ENCODE measurements at regions of chr1 and their contacts with region 1.

Region 1: DNA sequence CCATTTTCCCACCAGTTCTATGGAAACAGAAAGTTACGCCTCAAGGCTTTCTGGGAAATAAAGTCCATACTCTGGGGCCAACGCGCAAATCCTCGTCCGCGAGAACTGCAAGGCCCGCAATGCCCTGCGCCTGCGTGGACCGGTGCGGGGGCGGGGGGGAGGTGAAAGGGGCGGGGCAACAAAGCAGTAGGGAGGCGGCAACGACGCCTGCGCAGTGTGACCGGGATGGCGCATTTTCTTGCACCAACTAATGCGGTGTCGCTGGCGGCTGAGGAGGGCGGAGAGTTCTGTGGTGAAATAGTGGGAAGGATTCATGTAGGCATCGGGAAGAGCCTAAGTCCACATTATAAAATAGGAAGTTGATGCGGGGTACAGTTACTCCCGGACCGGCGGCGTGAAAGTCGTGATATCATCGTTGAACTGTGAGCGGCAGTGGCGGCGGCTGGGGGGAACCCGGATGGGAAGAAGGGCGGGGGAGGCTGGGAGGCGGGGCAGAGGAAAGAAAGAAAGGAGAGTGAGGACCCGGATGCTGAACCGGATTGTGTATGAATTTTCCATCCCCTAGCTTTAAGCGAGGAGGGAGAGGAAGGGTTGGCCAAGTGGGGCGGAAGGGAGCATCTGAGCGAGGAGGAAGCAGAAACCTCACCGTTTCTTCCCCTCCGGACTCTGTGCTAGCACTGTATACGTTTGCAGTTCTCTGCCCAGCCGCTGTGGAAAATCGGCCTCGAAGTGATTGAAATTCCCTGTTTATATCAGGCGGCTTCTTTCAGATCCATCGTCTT is at the start of gene GGPS1:
- DNase-seq: peak; percentile 97
- H3K4me3 ChIP-seq: peak within 1 kb of the TSS; percentile 83
- H3K27ac ChIP-seq: peak within 1 kb of the TSS; percentile 92
- H3K4me1 ChIP-seq: peaks cover 13% of the 10 kb centered on the region
- H3K27me3 ChIP-seq: no peaks in the 10 kb centered on the region
- CTCF ChIP-seq: no peak
- total RNA-seq, gene GGPS1: 26.8 and 30.4 TPM in 2 replicates

Region 2: GRCh38 chr1:235043234-235043633 is 285.3 kb before region 1 on chr1:
- CTCF ChIA-PET with region 1: no interaction called
- POLR2A ChIA-PET with region 1: no interaction called
- intact Hi-C with region 1: no loop called
- DNase-seq: no peak
- H3K4me3 ChIP-seq: no peak overlapping the region
- H3K27ac ChIP-seq: no peak overlapping the region
- H3K4me1 ChIP-seq: no peaks in the 10 kb centered on the region
- H3K27me3 ChIP-seq: no peaks in the 10 kb centered on the region
- CTCF ChIP-seq: no peak

Region 3: GRCh38 chr1:235253219-235253962 is 75.2 kb before region 1 on chr1:
- CTCF ChIA-PET with region 1: interaction called, 4 read pairs
- POLR2A ChIA-PET with region 1: no interaction called
- intact Hi-C with region 1: loop called (anchors 10 kb)
- DNase-seq: peak; percentile 76
- H3K4me3 ChIP-seq: no peak overlapping the region
- H3K27ac ChIP-seq: no peak overlapping the region
- H3K4me1 ChIP-seq: no peaks in the 10 kb centered on the region
- H3K27me3 ChIP-seq: no peaks in the 10 kb centered on the region
- CTCF ChIP-seq: peak; percentile 70

Region 4: DNA sequence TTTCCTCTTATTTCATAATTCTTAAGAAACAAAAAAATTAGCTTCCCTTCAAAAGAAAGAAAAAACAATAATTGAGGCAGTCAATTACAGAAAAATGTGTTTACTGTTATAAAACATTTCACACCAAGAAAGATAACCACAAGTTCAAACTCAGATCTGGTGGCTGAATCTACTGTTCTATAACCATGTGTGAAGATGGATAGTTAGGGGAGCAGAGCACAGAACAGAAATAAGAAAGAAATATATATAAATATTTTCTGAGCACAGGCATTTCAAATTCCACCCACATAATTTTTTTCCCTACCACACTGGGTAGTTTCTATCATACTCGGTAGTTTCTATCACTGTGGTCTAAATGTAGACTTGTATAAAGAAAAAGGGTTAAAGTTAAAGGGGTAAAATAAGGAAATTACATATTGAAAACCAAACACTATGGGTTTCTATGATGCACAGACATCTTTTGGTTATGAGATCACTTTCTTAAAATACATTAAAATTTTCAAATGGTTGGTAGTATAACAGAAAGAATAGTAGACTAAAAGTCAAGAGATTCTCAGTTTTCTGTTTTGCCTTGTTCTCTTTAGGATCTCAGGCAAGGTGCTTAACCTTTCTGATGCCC is 527.4 kb after region 1 on chr1:
- CTCF ChIA-PET with region 1: no interaction called
- POLR2A ChIA-PET with region 1: no interaction called
- intact Hi-C with region 1: no loop called
- DNase-seq: no peak
- H3K4me3 ChIP-seq: no peak overlapping the region
- H3K27ac ChIP-seq: no peak overlapping the region
- H3K4me1 ChIP-seq: no peaks in the 10 kb centered on the region
- H3K27me3 ChIP-seq: no peaks in the 10 kb centered on the region
- CTCF ChIP-seq: no peak

Measured in A673 (cell line).